ENCODE measurements at regions of chr17 and their contacts with region 1.

Region 1: DNA sequence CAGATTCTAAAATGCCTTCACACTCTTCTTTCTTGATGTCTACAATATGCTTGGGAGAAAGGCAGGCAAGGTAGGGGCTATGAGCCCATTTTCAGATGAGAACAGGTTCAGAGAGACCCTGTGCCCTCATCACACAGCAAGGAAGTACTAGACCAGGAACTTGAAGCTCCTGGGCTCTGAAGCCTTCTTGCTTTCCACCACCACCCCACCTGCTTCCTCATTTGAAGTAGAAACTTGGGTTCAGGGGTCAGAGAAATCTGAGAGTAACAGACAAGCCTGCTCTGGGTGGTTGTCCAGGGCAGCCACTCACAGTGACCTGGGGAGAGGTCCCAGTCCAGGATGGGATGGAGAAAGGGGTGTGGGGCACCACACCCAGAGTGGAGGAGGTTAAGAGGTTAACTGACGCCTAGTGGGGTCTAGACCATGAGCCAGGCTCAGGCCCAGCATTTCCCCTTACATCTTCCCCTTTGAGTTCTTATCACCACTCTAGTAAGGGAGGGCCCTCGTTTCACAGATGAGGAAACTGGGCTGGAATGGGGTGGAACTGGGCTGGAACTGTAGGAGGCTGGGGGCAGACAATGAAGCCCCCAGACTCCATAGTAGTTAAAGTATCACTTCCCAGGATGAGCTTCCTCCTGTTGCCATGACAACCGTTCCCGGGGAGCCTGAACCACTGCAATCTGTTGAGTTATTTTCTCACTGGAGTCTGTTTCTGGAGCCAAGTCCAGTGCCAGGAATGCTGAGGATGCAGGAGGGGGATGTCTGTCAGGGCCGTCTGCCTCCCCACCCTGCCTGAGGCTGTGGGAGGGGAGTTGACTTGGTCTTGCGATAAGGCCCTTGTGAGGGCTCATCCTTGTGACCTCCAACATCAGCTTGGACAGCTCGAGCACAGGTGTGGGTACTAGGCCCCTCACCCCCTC is 16.2 kb upstream of the PHF12 start:
- DNase-seq: no peak
- H3K4me3 Mint-ChIP-seq: no peak overlapping the region
- H3K27ac Mint-ChIP-seq: no peak overlapping the region
- H3K4me1 Mint-ChIP-seq: peaks cover 2% of the 10 kb centered on the region
- H3K27me3 Mint-ChIP-seq: peaks cover 8% of the 10 kb centered on the region

Region 2: GRCh38 chr17:29111816-29112499 is 144.5 kb after region 1 on chr17:
- intact Hi-C with region 1: loop called (anchors 1 kb)
- DNase-seq: peak; percentile 91
- H3K4me3 Mint-ChIP-seq: no peak overlapping the region
- H3K27ac Mint-ChIP-seq: no peak overlapping the region
- H3K4me1 Mint-ChIP-seq: peaks cover 5% of the 10 kb centered on the region
- H3K27me3 Mint-ChIP-seq: no peaks in the 10 kb centered on the region

Region 3: GRCh38 chr17:29116804-29117772 is 149.6 kb after region 1 on chr17:
- intact Hi-C with region 1: loop called (anchors 1 kb)
- DNase-seq: peak; percentile 92
- H3K4me3 Mint-ChIP-seq: no peak overlapping the region
- H3K27ac Mint-ChIP-seq: no peak overlapping the region
- H3K4me1 Mint-ChIP-seq: peaks cover 8% of the 10 kb centered on the region
- H3K27me3 Mint-ChIP-seq: no peaks in the 10 kb centered on the region

Measured in activated CD4-positive, alpha-beta T cell treated with anti-CD3 and anti-CD28 coated beads, Interleukin-2, amount 10 ng/mL, durations not matched to agents 24 days and 14 days (primary cell).